Activated B cell treated with CpG ODN at 0.5 μM for 24 hours (primary cell): ENCODE measurements at regions of chr5 and their contacts with region 1.

Region 1: DNA sequence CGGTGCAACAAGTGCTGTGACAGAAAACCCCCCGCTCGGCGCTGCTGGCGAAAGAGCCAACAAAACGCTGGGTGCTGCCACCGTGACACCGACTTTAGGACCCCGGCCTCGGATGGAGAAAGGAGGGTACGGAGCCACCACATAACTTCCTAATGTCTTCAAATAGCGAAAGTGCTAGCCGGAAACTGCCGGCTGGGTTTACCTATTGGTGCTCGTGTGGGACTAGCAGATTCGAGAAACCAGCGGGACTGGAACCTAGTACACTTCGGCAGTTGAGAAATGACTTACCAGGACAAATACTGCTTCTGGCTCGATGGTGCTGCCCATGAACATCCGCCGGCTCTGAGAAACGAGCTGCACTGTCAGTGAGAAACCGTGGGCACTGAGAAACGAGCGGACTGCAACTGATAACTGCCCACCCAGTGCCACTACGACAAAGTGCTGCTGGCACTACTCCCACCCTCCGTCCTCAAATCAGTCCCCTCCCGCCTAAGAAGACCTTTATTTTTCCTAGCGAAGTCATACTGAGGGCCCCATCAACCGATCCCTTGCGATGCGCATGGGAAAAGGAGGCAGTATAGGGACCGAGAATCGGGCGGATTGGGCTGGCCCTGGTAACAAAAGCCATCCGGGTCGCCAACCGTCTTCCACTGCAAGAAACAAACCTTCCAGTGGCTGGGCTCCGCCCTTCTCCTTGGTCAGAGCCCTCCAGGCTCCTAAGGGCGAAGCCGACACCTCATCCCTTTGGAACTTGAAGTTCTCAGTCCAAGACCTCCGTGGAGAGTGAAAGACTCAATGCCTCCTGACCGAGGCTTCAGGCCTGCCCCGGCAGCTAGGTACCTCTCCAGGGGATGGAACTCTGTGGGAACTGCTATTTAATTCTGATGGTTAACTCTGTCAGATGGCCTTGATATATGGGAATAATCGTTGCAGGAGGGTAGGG is 27.0 kb upstream of the ANXA2R start:
- DNase-seq: peak; percentile 83
- ATAC-seq: peak; percentile 55
- H3K4me3 Mint-ChIP-seq: peak overlapping the region; percentile 95
- H3K27ac Mint-ChIP-seq: peak overlapping the region; percentile 99
- H3K4me1 Mint-ChIP-seq: peaks cover 40% of the 10 kb centered on the region
- H3K27me3 Mint-ChIP-seq: no peaks in the 10 kb centered on the region
- CTCF ChIP-seq: no peak

Region 2: DNA sequence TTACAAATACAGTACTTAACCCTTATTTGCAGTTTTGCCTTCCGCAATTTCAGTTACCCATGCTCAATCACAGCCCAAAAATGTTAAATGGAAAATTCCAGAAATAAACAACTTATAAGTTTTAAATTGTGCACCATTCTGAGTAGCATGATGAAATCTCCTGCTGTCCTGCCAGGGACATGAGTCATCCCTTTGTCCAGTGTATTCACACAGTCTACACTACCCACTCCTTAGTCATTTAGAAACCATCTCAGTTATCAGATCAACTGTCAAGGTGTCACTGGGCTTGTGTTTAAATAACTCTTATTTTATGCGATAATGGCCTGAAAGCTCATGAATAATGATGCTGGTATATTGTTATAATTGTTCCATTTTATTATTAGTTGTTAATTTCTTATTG is 1652.5 kb before region 1 on chr5:
- CTCF ChIA-PET with region 1: no interaction called
- POLR2A ChIA-PET with region 1: no interaction called
- intact Hi-C with region 1: no loop called
- DNase-seq: no peak
- ATAC-seq: no peak
- H3K4me3 Mint-ChIP-seq: no peak overlapping the region
- H3K27ac Mint-ChIP-seq: no peak overlapping the region
- H3K4me1 Mint-ChIP-seq: no peaks in the 10 kb centered on the region
- H3K27me3 Mint-ChIP-seq: no peaks in the 10 kb centered on the region
- CTCF ChIP-seq: no peak

Region 3: DNA sequence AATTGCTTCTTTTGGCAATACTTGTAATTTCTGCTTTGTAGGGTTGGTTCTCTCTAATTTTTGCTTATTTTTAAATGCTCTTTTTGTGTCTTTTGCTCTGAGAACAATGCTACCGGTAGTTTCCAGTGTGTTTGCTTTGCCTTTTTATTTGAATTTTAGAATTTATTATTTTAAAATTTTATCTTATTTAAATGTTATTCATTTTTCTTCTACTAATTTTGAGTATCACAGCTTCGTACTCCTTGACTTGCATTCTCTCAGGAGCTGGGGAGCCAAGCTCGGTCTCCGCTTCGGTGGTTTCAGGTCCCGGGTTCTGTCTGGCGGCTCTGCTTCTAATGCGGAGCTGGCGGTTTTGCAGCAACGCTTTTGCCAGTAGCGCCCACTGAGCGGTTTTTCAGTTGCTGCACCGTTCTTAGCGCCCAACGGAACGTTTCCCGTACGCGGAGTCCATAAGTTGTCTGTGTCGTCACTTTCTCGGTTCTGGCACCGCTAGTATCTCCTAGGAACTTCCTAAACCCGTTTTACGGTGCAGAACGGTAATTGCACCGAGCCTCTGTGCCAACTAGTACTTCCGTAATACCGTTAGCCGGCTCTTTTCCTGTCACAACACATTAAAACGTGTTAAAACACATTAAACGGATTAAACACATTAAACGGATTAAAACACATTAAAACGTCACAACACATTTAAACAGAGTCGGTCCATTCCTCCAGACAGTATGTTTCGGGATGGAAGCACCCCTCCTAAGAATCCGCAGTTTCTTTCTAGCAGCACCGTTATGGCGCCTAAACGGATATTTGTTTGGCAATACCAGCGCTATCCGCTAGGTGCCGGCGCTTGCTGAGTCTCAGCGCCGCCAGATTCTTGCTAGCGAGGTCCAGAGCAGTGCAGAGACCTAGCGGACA is 72.6 kb before region 1 on chr5:
- CTCF ChIA-PET with region 1: interaction called, 16 read pairs
- POLR2A ChIA-PET with region 1: interaction called, 156 read pairs
- intact Hi-C with region 1: loop called (anchors 1 kb)
- DNase-seq: peak; percentile 72
- ATAC-seq: peak; percentile 66
- H3K4me3 Mint-ChIP-seq: peak overlapping the region; percentile 99
- H3K27ac Mint-ChIP-seq: peak overlapping the region; percentile 100
- H3K4me1 Mint-ChIP-seq: peaks cover 34% of the 10 kb centered on the region
- H3K27me3 Mint-ChIP-seq: peaks cover under 1% of the 10 kb centered on the region
- CTCF ChIP-seq: peak; percentile 89

Region 4: GRCh38 chr5:43008369-43009153 is 58.5 kb before region 1 on chr5:
- CTCF ChIA-PET with region 1: interaction called, 8 read pairs
- POLR2A ChIA-PET with region 1: interaction called, 110 read pairs
- intact Hi-C with region 1: loop called (anchors 1 kb)
- DNase-seq: peak; percentile 77
- ATAC-seq: peak; percentile 53
- H3K4me3 Mint-ChIP-seq: peak overlapping the region; percentile 89
- H3K27ac Mint-ChIP-seq: peak overlapping the region; percentile 98
- H3K4me1 Mint-ChIP-seq: peaks cover 31% of the 10 kb centered on the region
- H3K27me3 Mint-ChIP-seq: no peaks in the 10 kb centered on the region
- CTCF ChIP-seq: no peak

Region 5: GRCh38 chr5:43019614-43020293 is 47.3 kb before region 1 on chr5:
- CTCF ChIA-PET with region 1: interaction called, 15 read pairs
- POLR2A ChIA-PET with region 1: interaction called, 116 read pairs
- intact Hi-C with region 1: loop called (anchors 1 kb)
- DNase-seq: peak; percentile 61
- ATAC-seq: peak; percentile 64
- H3K4me3 Mint-ChIP-seq: peak overlapping the region; percentile 97
- H3K27ac Mint-ChIP-seq: peak overlapping the region; percentile 100
- H3K4me1 Mint-ChIP-seq: peaks cover 39% of the 10 kb centered on the region
- H3K27me3 Mint-ChIP-seq: no peaks in the 10 kb centered on the region
- CTCF ChIP-seq: no peak

Region 6: DNA sequence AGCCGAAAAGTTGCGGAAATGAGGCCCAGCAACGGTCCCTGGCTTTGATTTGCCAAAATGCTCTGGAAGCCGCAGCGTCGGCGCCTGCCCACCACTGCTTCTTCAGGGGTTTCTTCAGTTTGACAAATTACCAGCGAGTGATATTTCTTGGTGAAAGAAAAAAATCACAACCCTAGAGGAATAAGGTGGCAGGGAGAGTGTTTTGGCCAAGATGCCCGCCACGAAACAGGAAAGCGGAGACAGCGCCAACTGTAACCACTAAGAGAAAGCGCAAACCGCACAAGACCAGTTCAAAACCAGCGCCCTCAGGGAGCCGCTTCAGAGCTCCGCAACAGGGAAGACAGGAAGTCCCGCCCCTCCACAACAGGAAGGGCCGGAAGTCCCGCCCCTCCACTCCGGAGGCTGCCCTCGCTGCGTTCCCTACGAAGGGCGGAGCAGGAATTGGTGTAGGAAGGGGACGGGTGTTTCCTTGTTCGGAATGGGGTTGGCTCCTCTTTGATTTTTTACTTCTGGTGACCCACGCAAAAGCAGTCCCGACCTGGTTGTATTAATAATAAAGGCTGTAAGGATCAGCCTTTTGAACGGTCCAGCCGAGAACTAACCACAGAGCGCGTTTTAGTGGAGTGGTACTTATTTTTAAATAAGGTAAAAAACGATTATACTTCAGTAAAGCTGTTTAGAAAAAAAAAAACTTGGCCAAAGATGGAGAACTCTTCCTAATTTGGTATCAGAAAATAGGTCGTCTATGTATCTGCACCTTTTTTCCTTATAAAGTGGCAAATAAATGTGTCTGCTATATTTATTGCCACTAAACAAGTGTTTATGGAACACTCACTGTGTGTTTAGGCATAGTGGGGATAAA is 448.0 kb after region 1 on chr5 and contains the start of gene C5orf34:
- CTCF ChIA-PET with region 1: no interaction called
- POLR2A ChIA-PET with region 1: interaction called, 3 read pairs
- intact Hi-C with region 1: loop called (anchors 1 kb)
- DNase-seq: peak; percentile 92
- ATAC-seq: peak; percentile 96
- H3K4me3 Mint-ChIP-seq: peak within 1 kb of the TSS; percentile 95
- H3K27ac Mint-ChIP-seq: peak within 1 kb of the TSS; percentile 95
- H3K4me1 Mint-ChIP-seq: peaks cover 23% of the 10 kb centered on the region
- H3K27me3 Mint-ChIP-seq: no peaks in the 10 kb centered on the region
- CTCF ChIP-seq: no peak
- total RNA-seq, gene C5orf34: 4.4 and 4.7 TPM in 2 replicates